ENCODE measurements at regions of chr1 and their contacts with region 1.

Region 1: DNA sequence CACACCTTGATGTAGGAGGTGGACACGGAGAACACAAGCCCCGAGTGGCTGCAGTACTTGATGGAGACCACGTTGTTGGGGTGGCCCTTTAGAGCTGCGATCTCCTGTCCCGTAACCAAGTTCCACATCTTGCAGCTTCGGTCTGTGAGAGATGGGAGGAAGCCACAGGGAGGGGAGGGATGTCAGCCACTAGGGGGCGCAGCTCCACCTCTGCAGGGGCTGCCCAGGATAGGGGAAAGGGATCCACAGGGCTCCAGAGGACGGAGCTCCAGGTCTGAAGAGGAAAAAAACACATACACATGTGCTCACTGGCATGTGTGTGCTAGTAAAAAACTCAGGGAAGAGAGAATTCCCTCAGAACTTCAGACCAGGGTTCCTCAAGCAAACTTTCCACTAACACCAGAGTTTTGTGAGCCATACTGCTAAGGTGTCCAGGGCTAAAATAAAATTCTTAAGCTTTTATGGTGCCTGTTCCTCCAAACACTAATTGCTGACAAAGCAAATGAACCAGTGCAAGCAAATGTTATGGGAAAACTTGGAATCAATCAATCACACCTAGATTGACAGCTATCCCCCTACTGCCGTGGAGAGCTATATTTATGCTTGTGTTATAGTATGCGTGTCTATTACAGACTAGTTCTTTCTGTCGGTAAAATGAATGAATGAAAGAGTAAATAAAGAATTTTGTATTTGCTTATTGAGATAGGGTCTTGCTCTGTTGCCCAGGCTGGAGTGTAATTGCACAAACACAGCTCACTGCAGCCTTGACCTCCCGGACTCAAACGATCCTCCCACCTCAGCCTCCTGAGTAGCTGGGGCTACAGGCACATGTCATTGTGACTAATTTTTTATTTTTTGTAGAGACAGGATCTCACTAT is 43.7 kb downstream of the KIF21B start:
- DNase-seq: peak; percentile 83
- H3K4me3 Mint-ChIP-seq: no peak overlapping the region
- H3K27ac Mint-ChIP-seq: no peak overlapping the region
- H3K4me1 Mint-ChIP-seq: no peaks in the 10 kb centered on the region
- H3K27me3 Mint-ChIP-seq: no peaks in the 10 kb centered on the region

Region 2: GRCh38 chr1:200738740-200739498 is 240.9 kb before region 1 on chr1 and contains the start of gene CAMSAP2:
- CTCF ChIA-PET with region 1: no interaction called
- intact Hi-C with region 1: no loop called
- DNase-seq: peak; percentile 69
- H3K4me3 Mint-ChIP-seq: peak within 1 kb of the TSS; percentile 98
- H3K27ac Mint-ChIP-seq: peak within 1 kb of the TSS; percentile 89
- H3K4me1 Mint-ChIP-seq: peaks cover 26% of the 10 kb centered on the region
- H3K27me3 Mint-ChIP-seq: no peaks in the 10 kb centered on the region
- total RNA-seq, gene CAMSAP2: 3.9 to 6.5 TPM

Region 3: GRCh38 chr1:200992382-200993048 is 12.7 kb after region 1 on chr1:
- CTCF ChIA-PET with region 1: interaction called, 18 read pairs
- intact Hi-C with region 1: no loop called
- DNase-seq: no peak
- H3K4me3 Mint-ChIP-seq: no peak overlapping the region
- H3K27ac Mint-ChIP-seq: no peak overlapping the region
- H3K4me1 Mint-ChIP-seq: no peaks in the 10 kb centered on the region
- H3K27me3 Mint-ChIP-seq: no peaks in the 10 kb centered on the region

Region 4: GRCh38 chr1:201001960-201002359 is 22.1 kb after region 1 on chr1:
- CTCF ChIA-PET with region 1: interaction called, 15 read pairs
- intact Hi-C with region 1: no loop called
- DNase-seq: no peak
- H3K4me3 Mint-ChIP-seq: no peak overlapping the region
- H3K27ac Mint-ChIP-seq: peak overlapping the region; percentile 54
- H3K4me1 Mint-ChIP-seq: peaks cover 18% of the 10 kb centered on the region
- H3K27me3 Mint-ChIP-seq: no peaks in the 10 kb centered on the region

Region 5: DNA sequence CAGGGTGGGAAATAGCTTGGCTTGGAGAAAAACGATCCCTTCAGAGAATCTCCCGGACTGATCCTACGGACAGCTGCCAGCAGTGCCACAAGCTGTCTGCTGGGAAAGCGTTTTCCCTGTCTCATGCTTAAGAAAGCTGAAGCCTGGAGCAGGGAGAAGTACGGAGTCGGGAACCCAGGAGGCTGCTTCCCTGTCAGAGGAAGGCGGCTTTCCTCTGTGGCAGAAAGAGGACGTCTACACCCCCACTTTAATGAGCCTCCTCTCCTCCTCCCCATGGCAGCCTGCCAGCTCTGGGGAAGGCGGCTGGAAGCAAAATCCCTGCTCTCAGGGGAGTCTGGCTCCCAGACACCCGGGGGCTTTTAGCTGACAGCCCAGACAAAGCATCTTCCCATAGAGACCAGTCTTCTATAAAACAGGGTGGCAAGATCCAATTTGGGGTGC is 36.4 kb after region 1 on chr1:
- CTCF ChIA-PET with region 1: interaction called, 54 read pairs
- intact Hi-C with region 1: loop called (anchors 1 kb)
- DNase-seq: no peak
- H3K4me3 Mint-ChIP-seq: no peak overlapping the region
- H3K27ac Mint-ChIP-seq: peak overlapping the region; percentile 82
- H3K4me1 Mint-ChIP-seq: peaks cover 92% of the 10 kb centered on the region
- H3K27me3 Mint-ChIP-seq: no peaks in the 10 kb centered on the region

Region 6: GRCh38 chr1:201042779-201043461 is 63.1 kb after region 1 on chr1:
- CTCF ChIA-PET with region 1: interaction called, 161 read pairs
- intact Hi-C with region 1: loop called (anchors 1 kb)
- DNase-seq: peak; percentile 83
- H3K4me3 Mint-ChIP-seq: no peak overlapping the region
- H3K27ac Mint-ChIP-seq: no peak overlapping the region
- H3K4me1 Mint-ChIP-seq: no peaks in the 10 kb centered on the region
- H3K27me3 Mint-ChIP-seq: no peaks in the 10 kb centered on the region

Region 7: DNA sequence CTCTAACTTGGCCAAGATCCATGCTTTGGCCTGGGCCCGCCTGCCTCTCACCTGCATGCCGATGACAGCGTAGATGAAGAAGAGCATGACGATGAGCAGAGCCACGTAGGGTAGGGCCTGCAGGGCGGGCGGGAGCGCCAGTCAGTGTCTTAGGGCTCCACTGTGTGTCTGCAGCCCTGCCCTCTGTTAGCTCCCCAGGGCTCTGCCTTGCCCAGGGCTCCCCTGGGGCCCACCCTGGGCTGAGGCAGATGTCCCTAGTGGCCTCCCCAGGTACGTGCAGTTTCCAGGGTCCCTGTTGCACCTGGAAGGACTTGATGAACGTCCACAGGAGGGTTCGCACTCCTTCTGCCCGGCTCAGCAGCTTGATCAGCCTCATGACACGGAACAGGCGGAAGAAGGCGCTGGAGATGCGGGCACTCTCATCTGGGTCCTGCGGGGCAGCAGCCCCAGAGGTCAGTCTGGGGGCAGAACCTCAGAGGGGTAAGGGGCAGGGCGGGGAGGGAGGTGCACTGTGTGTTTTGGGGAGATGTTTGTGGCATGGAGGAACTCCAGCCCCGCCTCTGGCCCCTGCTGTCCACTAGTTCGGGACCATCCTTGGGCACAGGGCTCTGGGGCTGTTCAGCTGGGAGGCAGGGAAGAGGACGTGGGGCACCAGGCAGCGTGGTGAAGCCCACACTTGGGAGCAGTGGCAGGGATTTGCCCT is 73.5 kb after region 1 on chr1:
- CTCF ChIA-PET with region 1: interaction called, 13 read pairs
- intact Hi-C with region 1: no loop called
- DNase-seq: no peak
- H3K4me3 Mint-ChIP-seq: no peak overlapping the region
- H3K27ac Mint-ChIP-seq: no peak overlapping the region
- H3K4me1 Mint-ChIP-seq: peaks cover 13% of the 10 kb centered on the region
- H3K27me3 Mint-ChIP-seq: no peaks in the 10 kb centered on the region

Region 8: GRCh38 chr1:201119206-201120197 is 139.7 kb after region 1 on chr1:
- CTCF ChIA-PET with region 1: interaction called, 32 read pairs
- intact Hi-C with region 1: loop called (anchors 1 kb)
- DNase-seq: peak; percentile 82
- H3K4me3 Mint-ChIP-seq: no peak overlapping the region
- H3K27ac Mint-ChIP-seq: no peak overlapping the region
- H3K4me1 Mint-ChIP-seq: peaks cover 3% of the 10 kb centered on the region
- H3K27me3 Mint-ChIP-seq: peaks cover 2% of the 10 kb centered on the region